ENCODE measurements at regions of chr15 and their contacts with region 1.

Region 1: DNA sequence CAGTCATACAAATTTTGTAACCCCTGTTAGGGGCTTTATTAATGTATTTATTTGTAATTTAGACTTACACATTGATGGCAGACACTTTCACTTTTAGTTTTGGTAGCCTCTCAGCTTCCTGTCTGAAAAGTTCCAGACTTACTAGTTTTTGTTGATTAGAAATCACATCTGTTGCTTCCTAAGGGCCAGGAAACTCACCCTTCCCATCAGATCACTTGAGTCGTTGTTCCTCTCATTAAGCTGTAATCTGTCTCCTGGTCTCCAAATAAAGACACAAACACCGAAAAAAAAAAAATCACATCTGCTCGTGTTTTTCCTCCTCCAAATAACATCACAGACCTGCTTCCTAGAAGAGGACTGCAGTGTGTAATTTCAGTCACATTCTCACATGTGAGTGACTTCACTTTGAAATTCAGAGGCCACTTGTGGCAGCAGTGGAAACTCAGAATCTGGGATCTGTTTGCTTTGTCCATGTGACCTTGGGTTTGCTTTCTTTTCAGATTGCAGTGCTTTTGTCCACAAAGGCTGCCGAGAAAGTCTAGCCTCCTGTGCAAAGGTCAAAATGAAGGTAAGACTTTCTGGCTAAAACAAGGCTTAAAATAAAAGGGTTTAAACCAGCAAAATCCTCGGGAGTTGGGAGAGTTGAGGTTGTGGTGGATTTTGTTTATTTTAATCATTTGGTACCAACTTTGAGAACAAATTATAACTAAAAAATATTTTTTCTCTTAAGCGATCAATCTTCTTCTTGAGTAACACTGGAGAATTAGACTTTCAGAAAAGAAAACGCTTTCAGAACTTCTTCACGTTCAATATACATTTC is 87.0 kb downstream of the KLHL25 start:
- DNase-seq: peak; percentile 58
- H3K4me3 Mint-ChIP-seq: peak overlapping the region; percentile 76
- H3K27ac Mint-ChIP-seq: peak overlapping the region; percentile 94
- H3K4me1 Mint-ChIP-seq: peaks cover 87% of the 10 kb centered on the region
- H3K27me3 Mint-ChIP-seq: no peaks in the 10 kb centered on the region

Region 2: GRCh38 chr15:85318048-85318731 is 389.5 kb before region 1 on chr15:
- CTCF ChIA-PET with region 1: no interaction called
- POLR2A ChIA-PET with region 1: no interaction called
- intact Hi-C with region 1: loop called (anchors 5 kb)
- DNase-seq: peak; percentile 50
- H3K4me3 Mint-ChIP-seq: no peak overlapping the region
- H3K27ac Mint-ChIP-seq: peak overlapping the region; percentile 28
- H3K4me1 Mint-ChIP-seq: peaks cover 49% of the 10 kb centered on the region
- H3K27me3 Mint-ChIP-seq: no peaks in the 10 kb centered on the region

Region 3: GRCh38 chr15:85543741-85544155 is 164.0 kb before region 1 on chr15:
- CTCF ChIA-PET with region 1: no interaction called
- POLR2A ChIA-PET with region 1: interaction called, 3 read pairs
- intact Hi-C with region 1: loop called (anchors 5 kb)
- DNase-seq: peak; percentile 20
- H3K4me3 Mint-ChIP-seq: no peak overlapping the region
- H3K27ac Mint-ChIP-seq: no peak overlapping the region
- H3K4me1 Mint-ChIP-seq: peaks cover 80% of the 10 kb centered on the region
- H3K27me3 Mint-ChIP-seq: no peaks in the 10 kb centered on the region

Region 4: GRCh38 chr15:85646538-85647091 is 61.1 kb before region 1 on chr15:
- CTCF ChIA-PET with region 1: interaction called, 3 read pairs
- POLR2A ChIA-PET with region 1: interaction called, 16 read pairs
- intact Hi-C with region 1: loop called (anchors 1 kb)
- DNase-seq: peak; percentile 58
- H3K4me3 Mint-ChIP-seq: no peak overlapping the region
- H3K27ac Mint-ChIP-seq: peak overlapping the region; percentile 90
- H3K4me1 Mint-ChIP-seq: peaks cover 65% of the 10 kb centered on the region
- H3K27me3 Mint-ChIP-seq: no peaks in the 10 kb centered on the region

Region 5: DNA sequence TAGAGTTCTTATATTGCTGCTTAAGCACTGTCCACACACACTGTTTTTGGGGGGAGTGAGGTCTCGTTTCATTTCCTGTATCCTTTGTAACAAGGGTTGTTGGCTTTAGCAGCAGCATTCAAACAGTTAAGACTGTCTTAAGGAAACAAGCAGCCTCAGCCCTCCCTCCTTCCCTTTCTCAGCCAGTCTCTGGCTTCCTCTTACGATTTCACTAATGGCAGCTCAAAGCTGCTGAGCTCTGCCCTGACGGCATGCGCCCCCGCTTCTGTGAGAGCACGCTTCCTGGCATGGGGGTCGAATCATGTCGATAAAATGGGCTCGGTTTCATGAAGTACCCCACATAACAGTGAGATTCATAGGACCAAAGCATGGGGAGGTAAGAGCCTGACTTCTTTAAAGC is 18.0 kb before region 1 on chr15:
- CTCF ChIA-PET with region 1: interaction called, 42 read pairs
- POLR2A ChIA-PET with region 1: interaction called, 133 read pairs
- intact Hi-C with region 1: loop called (anchors 1 kb)
- DNase-seq: peak; percentile 78
- H3K4me3 Mint-ChIP-seq: peak overlapping the region; percentile 81
- H3K27ac Mint-ChIP-seq: peak overlapping the region; percentile 98
- H3K4me1 Mint-ChIP-seq: peaks cover 78% of the 10 kb centered on the region
- H3K27me3 Mint-ChIP-seq: no peaks in the 10 kb centered on the region

Region 6: GRCh38 chr15:86650093-86650492 is 942.4 kb after region 1 on chr15:
- CTCF ChIA-PET with region 1: no interaction called
- POLR2A ChIA-PET with region 1: no interaction called
- intact Hi-C with region 1: loop called (anchors 10 kb)
- DNase-seq: peak; percentile 20
- H3K4me3 Mint-ChIP-seq: no peak overlapping the region
- H3K27ac Mint-ChIP-seq: peak overlapping the region; percentile 87
- H3K4me1 Mint-ChIP-seq: peaks cover 56% of the 10 kb centered on the region
- H3K27me3 Mint-ChIP-seq: no peaks in the 10 kb centered on the region